Caco-2 (cell line): ENCODE measurements at regions of chr2 and their contacts with region 1.

Region 1: DNA sequence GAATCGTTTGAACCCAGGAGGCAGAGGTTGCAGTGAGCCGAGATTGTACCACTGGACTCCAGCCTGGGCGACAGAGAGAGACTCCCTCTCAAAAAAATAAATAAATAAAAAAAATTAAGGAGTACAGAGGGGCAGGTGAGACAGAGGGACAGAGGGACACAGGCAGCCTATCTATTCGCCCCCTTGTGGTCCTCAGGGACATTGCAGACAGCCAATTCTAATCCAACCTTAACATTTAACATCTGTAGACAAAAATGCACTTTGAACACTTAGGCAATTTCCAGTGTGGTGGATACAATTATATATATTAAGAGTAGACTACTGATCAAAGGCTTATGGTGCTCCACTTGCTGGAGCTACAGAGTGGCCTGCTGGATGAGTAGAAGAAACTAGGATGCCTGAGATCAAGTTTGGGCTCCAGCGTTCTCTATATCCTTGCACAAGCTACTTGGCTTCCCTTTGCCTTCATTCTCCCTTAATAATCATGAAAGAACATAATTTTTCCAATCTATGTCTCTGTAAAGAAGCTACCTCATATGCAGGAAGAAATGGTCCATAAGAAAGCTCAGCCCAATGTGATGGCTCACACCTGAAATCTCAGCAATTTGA is 8.2 kb upstream of the SMARCAL1 start:
- DNase-seq: peak in 1 of 2 experiments; percentile 51
- H3K4me3 ChIP-seq: no peak overlapping the region
- H3K4me3 Mint-ChIP-seq: no peak overlapping the region
- H3K27ac Mint-ChIP-seq: no peak overlapping the region
- H3K4me1 ChIP-seq: no peaks in the 10 kb centered on the region
- H3K4me1 Mint-ChIP-seq: no peaks in the 10 kb centered on the region
- H3K27me3 ChIP-seq: peaks cover 1% of the 10 kb centered on the region
- H3K27me3 Mint-ChIP-seq: peaks cover 16% of the 10 kb centered on the region
- CTCF ChIP-seq: peak; percentile 76 to 90

Region 2: DNA sequence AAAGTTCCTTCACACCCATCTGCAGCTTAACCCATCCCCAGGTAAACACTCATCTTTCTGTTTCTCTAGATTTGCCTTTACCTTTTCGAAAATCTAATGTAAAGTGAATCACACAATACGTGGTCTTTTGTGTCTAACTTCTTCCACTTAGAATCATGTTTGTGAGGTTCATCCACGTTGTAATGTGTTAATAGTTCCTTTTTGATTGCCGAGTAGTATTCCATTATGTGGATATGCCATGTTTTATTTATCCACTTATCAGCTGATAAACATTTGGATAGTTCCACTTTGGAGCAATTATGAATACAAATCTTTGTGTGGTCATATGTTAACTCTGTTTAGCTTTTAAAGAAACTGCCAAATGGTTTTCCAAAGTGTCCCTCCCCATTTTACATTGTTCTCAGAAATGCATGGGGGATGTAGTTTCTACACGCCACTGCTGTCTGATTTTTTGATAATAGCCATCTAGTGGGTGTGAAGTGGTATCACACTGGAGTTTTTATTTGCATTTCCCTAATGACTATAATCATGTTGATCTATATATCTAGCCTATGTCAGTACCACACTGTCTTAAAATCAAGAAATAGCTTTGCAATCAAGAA is 344.8 kb before region 1 on chr2:
- CTCF ChIA-PET with region 1: no interaction called
- POLR2A ChIA-PET with region 1: no interaction called
- intact Hi-C with region 1: loop called (anchors 5 kb)
- DNase-seq: no peak
- H3K4me3 ChIP-seq: no peak overlapping the region
- H3K4me3 Mint-ChIP-seq: no peak overlapping the region
- H3K27ac Mint-ChIP-seq: no peak overlapping the region
- H3K4me1 ChIP-seq: peaks cover 14% of the 10 kb centered on the region
- H3K4me1 Mint-ChIP-seq: peaks cover 5% of the 10 kb centered on the region
- H3K27me3 ChIP-seq: no peaks in the 10 kb centered on the region
- H3K27me3 Mint-ChIP-seq: no peaks in the 10 kb centered on the region
- CTCF ChIP-seq: peak in 1 of 2 experiments; percentile 31

Region 3: DNA sequence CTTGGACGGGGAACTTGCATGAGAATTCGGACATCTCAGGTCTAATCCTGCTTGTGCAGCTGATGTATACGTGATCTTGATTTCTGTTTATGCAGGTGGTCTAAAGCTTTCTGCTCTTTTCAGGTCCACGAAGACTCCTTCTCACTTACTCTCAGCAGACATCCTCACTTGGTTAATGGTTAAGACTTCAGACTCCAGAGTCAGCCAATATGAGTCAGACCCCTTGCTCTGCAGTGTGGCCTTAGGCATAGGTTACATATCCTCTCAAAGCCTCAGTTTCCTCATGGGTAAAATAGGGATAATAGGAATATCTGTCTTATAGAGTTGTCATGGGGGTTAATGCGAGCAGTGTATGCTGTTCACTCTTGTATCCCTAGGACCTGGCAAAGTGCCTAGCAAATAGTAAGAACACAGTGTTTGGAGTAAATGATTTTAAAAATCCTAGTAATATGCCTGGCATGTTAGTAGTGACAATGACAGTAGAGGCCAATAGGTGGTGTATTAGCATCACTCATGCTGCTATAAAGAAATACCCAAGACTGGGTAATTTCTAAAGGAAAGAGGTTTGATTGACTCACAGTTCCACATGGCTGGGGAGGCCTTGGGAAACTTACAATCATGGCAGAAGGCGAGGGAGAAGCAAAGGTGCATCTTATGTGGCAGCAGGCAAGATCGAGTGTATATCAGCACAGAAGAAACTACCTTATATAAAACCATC is 252.6 kb before region 1 on chr2:
- CTCF ChIA-PET with region 1: no interaction called
- POLR2A ChIA-PET with region 1: no interaction called
- intact Hi-C with region 1: loop called (anchors 2 kb)
- DNase-seq: no peak
- H3K4me3 ChIP-seq: no peak overlapping the region
- H3K4me3 Mint-ChIP-seq: no peak overlapping the region
- H3K27ac Mint-ChIP-seq: no peak overlapping the region
- H3K4me1 ChIP-seq: no peaks in the 10 kb centered on the region
- H3K4me1 Mint-ChIP-seq: peaks cover 6% of the 10 kb centered on the region
- H3K27me3 ChIP-seq: no peaks in the 10 kb centered on the region
- H3K27me3 Mint-ChIP-seq: no peaks in the 10 kb centered on the region
- CTCF ChIP-seq: peak; percentile 16 to 18

Region 4: GRCh38 chr2:216222650-216223352 is 181.3 kb before region 1 on chr2:
- CTCF ChIA-PET with region 1: no interaction called
- POLR2A ChIA-PET with region 1: no interaction called
- intact Hi-C with region 1: loop called (anchors 2 kb)
- DNase-seq: no peak
- H3K4me3 ChIP-seq: no peak overlapping the region
- H3K4me3 Mint-ChIP-seq: no peak overlapping the region
- H3K27ac Mint-ChIP-seq: no peak overlapping the region
- H3K4me1 ChIP-seq: no peaks in the 10 kb centered on the region
- H3K4me1 Mint-ChIP-seq: no peaks in the 10 kb centered on the region
- H3K27me3 ChIP-seq: no peaks in the 10 kb centered on the region
- H3K27me3 Mint-ChIP-seq: no peaks in the 10 kb centered on the region
- CTCF ChIP-seq: no peak

Region 5: DNA sequence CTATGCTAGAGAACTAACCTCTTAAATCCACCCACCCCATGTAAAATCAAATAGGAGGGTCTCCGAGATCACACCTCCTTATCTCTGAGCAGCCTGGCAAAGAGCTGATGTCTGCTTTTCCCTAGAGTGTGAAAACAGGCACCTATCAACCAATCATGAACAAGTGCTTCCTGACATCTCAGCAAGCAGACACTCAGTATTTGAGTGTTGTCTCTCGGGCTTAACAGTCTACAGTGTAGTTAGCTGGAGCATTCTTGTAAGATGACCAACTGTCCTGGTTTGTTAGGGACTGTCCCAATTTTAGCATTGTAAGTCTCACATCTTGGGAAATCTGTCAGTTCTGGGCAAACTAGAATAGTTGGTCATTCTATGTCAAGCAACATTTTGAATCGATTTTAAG is 58.3 kb before region 1 on chr2:
- CTCF ChIA-PET with region 1: no interaction called
- POLR2A ChIA-PET with region 1: interaction called, 16 read pairs
- intact Hi-C with region 1: no loop called
- DNase-seq: no peak
- H3K4me3 ChIP-seq: no peak overlapping the region
- H3K4me3 Mint-ChIP-seq: no peak overlapping the region
- H3K27ac Mint-ChIP-seq: no peak overlapping the region
- H3K4me1 ChIP-seq: no peaks in the 10 kb centered on the region
- H3K4me1 Mint-ChIP-seq: no peaks in the 10 kb centered on the region
- H3K27me3 ChIP-seq: peaks cover 1% of the 10 kb centered on the region; the same call in 1 of the 2 replicates
- H3K27me3 Mint-ChIP-seq: peaks cover 36% of the 10 kb centered on the region
- CTCF ChIP-seq: no peak

Region 6: GRCh38 chr2:216389570-216389969 is 14.5 kb before region 1 on chr2:
- CTCF ChIA-PET with region 1: no interaction called
- POLR2A ChIA-PET with region 1: no interaction called
- intact Hi-C with region 1: no loop called
- DNase-seq: no peak
- H3K4me3 ChIP-seq: no peak overlapping the region
- H3K4me3 Mint-ChIP-seq: no peak overlapping the region
- H3K27ac Mint-ChIP-seq: no peak overlapping the region
- H3K4me1 ChIP-seq: no peaks in the 10 kb centered on the region
- H3K4me1 Mint-ChIP-seq: no peaks in the 10 kb centered on the region
- H3K27me3 ChIP-seq: no peaks in the 10 kb centered on the region
- H3K27me3 Mint-ChIP-seq: peaks cover 17% of the 10 kb centered on the region
- CTCF ChIP-seq: no peak